Right lobe of liver (tissue), 6 donors: ENCODE measurements at regions of chr12 and their contacts with region 1.

Region 1: DNA sequence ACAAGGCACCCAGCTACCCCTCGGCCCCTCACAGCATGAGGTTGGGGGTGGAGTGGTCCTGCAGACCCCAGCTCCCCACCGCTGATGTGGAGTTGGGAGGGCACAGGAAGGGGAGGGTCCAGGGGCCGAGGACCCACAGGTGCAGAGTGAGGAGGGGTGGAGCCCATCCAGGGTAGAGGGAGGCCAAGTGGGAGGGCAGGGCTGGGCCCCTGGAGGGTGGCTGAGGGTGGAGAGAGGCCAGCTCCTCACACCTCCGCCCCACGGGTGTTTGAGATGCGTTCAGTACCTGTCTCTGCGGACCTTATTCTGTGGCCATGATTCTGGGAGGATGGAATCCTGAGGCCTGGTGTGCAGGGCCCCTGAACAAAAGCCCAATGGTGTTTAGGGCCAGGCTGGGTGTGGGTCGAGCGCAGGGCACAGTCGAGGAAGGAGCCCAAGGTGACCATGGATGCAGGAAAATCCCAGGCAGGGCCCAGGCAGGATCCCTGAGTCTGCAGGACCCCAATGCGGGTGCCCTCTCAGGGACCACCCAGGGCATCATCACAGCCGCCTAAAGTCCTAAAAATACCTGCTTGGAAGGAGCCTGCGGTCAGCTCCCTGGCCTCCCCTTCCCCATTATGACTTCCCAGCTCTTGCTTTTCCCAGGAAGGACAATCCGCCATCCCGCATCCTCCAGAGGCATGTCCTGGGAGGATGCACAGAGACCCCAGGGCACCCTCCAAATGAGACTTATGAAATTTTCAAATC is 377.1 kb upstream of the SFSWAP start:
- DNase-seq: no peak
- ATAC-seq: peak in 1 of 4 donors; percentile 48
- H3K4me3 ChIP-seq: no peak overlapping the region
- H3K27ac ChIP-seq: no peak overlapping the region
- H3K4me1 ChIP-seq: no peaks in the 10 kb centered on the region
- H3K27me3 ChIP-seq: no peaks in the 10 kb centered on the region
- CTCF ChIP-seq: no peak
- POLR2A ChIP-seq: no peak

Region 2: GRCh38 chr12:131621701-131622421 is 288.1 kb after region 1 on chr12:
- intact Hi-C with region 1: loop called in 1 of 2 experiments (anchors 10 kb)
- DNase-seq: no peak
- ATAC-seq: no peak
- H3K4me3 ChIP-seq: no peak overlapping the region
- H3K27ac ChIP-seq: no peak overlapping the region
- H3K4me1 ChIP-seq: no peaks in the 10 kb centered on the region
- H3K27me3 ChIP-seq: no peaks in the 10 kb centered on the region
- CTCF ChIP-seq: no peak
- POLR2A ChIP-seq: no peak

Region 3: GRCh38 chr12:131808744-131809371 is 475.1 kb after region 1 on chr12:
- intact Hi-C with region 1: no loop called
- DNase-seq: peak in 1 of 3 donors; percentile 63
- ATAC-seq: peak; percentile 13 to 67 (median 55)
- H3K4me3 ChIP-seq: no peak overlapping the region
- H3K27ac ChIP-seq: no peak overlapping the region
- H3K4me1 ChIP-seq: no peaks in the 10 kb centered on the region
- H3K27me3 ChIP-seq: no peaks in the 10 kb centered on the region
- CTCF ChIP-seq: no peak
- POLR2A ChIP-seq: no peak